ENCODE measurements at regions of chr3 and their contacts with region 1.

Region 1: GRCh38 chr3:23455084-23455483 is 252.0 kb downstream of the UBE2E2 start:
- DNase-seq: peak; percentile 95
- ATAC-seq: peak; percentile 95
- H3K4me3 ChIP-seq: no peak overlapping the region
- H3K27ac ChIP-seq: no peak overlapping the region
- H3K4me1 ChIP-seq: peaks cover 17% of the 10 kb centered on the region
- H3K27me3 ChIP-seq: no peaks in the 10 kb centered on the region
- CTCF ChIP-seq: no peak

Region 2: DNA sequence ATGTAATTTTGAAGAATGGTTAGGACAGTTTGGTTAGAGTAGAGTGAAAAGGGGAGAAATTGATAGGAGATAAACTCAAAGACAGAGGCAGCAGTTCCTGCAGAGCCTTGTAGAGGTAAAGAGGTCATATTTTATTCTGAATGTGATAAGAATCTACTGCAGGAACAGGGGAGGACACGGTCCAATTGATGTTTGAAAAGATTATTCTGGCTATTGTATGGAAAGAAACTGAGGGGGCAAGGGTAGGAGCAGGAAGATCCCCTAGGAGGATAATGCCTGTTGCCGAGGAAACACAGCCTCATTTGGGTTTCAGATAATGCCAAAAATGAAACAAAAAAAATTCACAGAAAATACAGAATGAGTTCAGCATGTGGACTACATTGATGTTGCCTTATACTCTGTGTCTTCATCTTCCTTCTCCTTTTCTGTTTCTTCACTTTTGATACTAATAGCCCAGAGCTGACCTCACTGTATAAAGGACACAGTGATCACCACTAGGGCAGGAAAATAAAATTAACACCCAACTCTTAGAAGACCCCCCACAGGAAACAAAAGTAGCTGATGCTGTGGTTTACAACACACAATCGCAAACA is 706.5 kb before region 1 on chr3:
- CTCF ChIA-PET with region 1: no interaction called
- POLR2A ChIA-PET with region 1: no interaction called
- intact Hi-C with region 1: no loop called
- DNase-seq: no peak
- ATAC-seq: no peak
- H3K4me3 ChIP-seq: no peak overlapping the region
- H3K27ac ChIP-seq: no peak overlapping the region
- H3K4me1 ChIP-seq: no peaks in the 10 kb centered on the region
- H3K27me3 ChIP-seq: no peaks in the 10 kb centered on the region
- CTCF ChIP-seq: no peak

Region 3: GRCh38 chr3:23183734-23184133 is 271.4 kb before region 1 on chr3:
- CTCF ChIA-PET with region 1: no interaction called
- POLR2A ChIA-PET with region 1: no interaction called
- intact Hi-C with region 1: no loop called
- DNase-seq: peak; percentile 81
- ATAC-seq: peak; percentile 98
- H3K4me3 ChIP-seq: no peak overlapping the region
- H3K27ac ChIP-seq: no peak overlapping the region
- H3K4me1 ChIP-seq: no peaks in the 10 kb centered on the region
- H3K27me3 ChIP-seq: no peaks in the 10 kb centered on the region
- CTCF ChIP-seq: peak; percentile 88

Region 4: DNA sequence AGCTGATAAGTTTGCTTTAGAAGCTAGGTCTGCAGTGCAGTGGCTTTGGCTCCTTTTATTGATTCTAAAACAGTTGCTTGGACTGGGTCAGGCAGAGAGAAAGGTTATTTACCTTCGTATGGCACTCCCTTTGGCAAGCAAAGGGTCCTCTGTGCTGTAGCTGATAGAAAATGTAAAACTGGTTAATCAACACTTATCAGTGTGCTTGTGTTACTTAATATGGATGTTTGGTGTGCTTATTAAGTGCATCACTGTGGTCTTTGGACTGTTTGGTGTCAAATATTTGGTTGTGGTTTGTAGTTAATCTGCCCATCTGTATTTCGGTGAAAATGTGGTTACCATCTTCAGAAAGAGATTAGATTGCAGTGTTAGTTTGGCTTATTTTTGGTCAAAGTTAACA is 236.0 kb before region 1 on chr3:
- CTCF ChIA-PET with region 1: no interaction called
- POLR2A ChIA-PET with region 1: no interaction called
- intact Hi-C with region 1: no loop called
- DNase-seq: peak; percentile 41
- ATAC-seq: peak; percentile 57
- H3K4me3 ChIP-seq: no peak overlapping the region
- H3K27ac ChIP-seq: no peak overlapping the region
- H3K4me1 ChIP-seq: peaks cover 27% of the 10 kb centered on the region
- H3K27me3 ChIP-seq: no peaks in the 10 kb centered on the region
- CTCF ChIP-seq: no peak

Region 5: DNA sequence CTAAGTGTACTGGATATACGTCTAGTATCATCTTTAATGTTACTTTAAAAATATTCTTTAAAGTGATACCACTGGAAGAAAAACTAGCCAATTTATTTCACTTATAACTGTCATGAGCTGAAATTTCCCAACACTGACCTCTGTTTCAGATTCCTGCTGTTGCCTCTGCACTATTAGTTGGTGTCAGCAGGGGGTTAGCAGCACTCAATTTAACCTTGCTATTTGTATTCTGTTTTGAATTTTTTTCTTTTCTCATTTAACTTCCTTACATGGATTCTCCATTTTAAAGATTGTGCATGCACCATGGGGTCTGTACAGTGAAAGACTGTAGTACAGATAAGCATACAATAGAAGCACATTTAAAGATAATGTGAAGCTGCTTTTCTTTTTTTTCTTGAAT is 82.8 kb before region 1 on chr3:
- CTCF ChIA-PET with region 1: no interaction called
- POLR2A ChIA-PET with region 1: no interaction called
- intact Hi-C with region 1: no loop called
- DNase-seq: no peak
- ATAC-seq: no peak
- H3K4me3 ChIP-seq: no peak overlapping the region
- H3K27ac ChIP-seq: no peak overlapping the region
- H3K4me1 ChIP-seq: no peaks in the 10 kb centered on the region
- H3K27me3 ChIP-seq: no peaks in the 10 kb centered on the region
- CTCF ChIP-seq: no peak

Region 6: GRCh38 chr3:23480329-23480714 is 25.2 kb after region 1 on chr3:
- CTCF ChIA-PET with region 1: no interaction called
- POLR2A ChIA-PET with region 1: interaction called, 12 read pairs
- intact Hi-C with region 1: no loop called
- DNase-seq: no peak
- ATAC-seq: no peak
- H3K4me3 ChIP-seq: no peak overlapping the region
- H3K27ac ChIP-seq: no peak overlapping the region
- H3K4me1 ChIP-seq: peaks cover 6% of the 10 kb centered on the region
- H3K27me3 ChIP-seq: no peaks in the 10 kb centered on the region
- CTCF ChIP-seq: no peak

Measured in PC-3 (cell line).